B cell (primary cell): ENCODE measurements at regions of chr14 and their contacts with region 1.

Region 1: GRCh38 chr14:23320774-23321571 is at the start of gene PABPN1:
- DNase-seq: peak; percentile 100
- ATAC-seq: peak; percentile 84
- H3K4me3 ChIP-seq: peak within 1 kb of the TSS; percentile 61 to 89 (median 79)
- H3K4me3 Mint-ChIP-seq: peak within 1 kb of the TSS; percentile 93
- H3K27ac ChIP-seq: peak within 1 kb of the TSS; percentile 91 to 99
- H3K27ac Mint-ChIP-seq: peak within 1 kb of the TSS; percentile 99
- H3K4me1 ChIP-seq: peaks cover 21 to 24% of the 10 kb centered on the region in 2 donors
- H3K4me1 Mint-ChIP-seq: peaks cover 33% of the 10 kb centered on the region
- H3K27me3 ChIP-seq: no peaks in the 10 kb centered on the region
- H3K27me3 Mint-ChIP-seq: no peaks in the 10 kb centered on the region
- CTCF ChIP-seq: no peak
- total RNA-seq, gene PABPN1: 280 and 293 TPM in 2 replicates

Region 2: DNA sequence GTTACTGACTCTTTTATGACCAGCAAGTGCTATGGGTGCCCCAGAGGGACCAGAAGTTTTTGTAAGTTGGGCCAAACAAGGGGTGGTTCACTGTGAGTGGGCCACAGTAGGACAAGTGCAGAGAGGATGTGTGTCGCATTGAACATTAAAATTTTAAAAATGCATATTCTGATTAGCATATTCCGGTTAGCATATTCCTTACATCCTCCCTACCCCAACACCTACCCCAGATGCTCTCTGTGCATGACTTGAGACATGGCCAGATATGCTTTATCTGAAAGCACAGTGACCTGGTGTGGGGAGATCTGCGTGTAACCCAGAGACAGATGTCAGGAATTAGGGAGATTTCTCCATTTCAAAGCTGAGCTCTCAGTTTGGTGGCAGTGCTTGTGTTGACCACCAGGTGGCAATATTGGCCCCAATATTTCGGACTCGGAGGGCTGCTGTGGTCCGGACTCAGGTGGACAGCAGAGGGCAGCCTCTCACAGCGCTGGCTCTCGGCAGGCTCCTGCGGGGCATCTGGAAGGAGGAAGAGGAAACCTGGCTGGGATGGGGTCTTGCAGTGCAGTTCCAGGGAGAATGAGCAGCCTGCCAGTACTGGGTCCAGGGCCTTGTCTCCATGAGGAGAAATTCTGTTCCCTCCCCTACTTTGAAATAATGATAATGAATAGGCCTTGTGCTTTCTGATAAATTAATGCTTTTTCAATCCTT is 200.3 kb before region 1 on chr14:
- CTCF ChIA-PET with region 1: interaction called, 32 read pairs
- POLR2A ChIA-PET with region 1: interaction called, 4 read pairs
- intact Hi-C with region 1: no loop called
- DNase-seq: peak; percentile 89
- ATAC-seq: peak; percentile 95
- H3K4me3 ChIP-seq: peak overlapping the region in 4 of 5 experiments; percentile 27 to 36 (median 30)
- H3K4me3 Mint-ChIP-seq: peak overlapping the region; percentile 79
- H3K27ac ChIP-seq: peak overlapping the region; percentile 72 to 88
- H3K27ac Mint-ChIP-seq: peak overlapping the region; percentile 89
- H3K4me1 ChIP-seq: peaks cover 32 to 35% of the 10 kb centered on the region in 2 donors
- H3K4me1 Mint-ChIP-seq: peaks cover 34% of the 10 kb centered on the region
- H3K27me3 ChIP-seq: no peaks in the 10 kb centered on the region
- H3K27me3 Mint-ChIP-seq: peaks cover 7% of the 10 kb centered on the region
- CTCF ChIP-seq: peak; percentile 99

Region 3: GRCh38 chr14:23294734-23295561 is 26.0 kb before region 1 on chr14:
- CTCF ChIA-PET with region 1: interaction called, 56 read pairs
- POLR2A ChIA-PET with region 1: interaction called, 84 read pairs
- intact Hi-C with region 1: no loop called
- DNase-seq: peak; percentile 83
- ATAC-seq: peak; percentile 86
- H3K4me3 ChIP-seq: no peak overlapping the region
- H3K4me3 Mint-ChIP-seq: peak overlapping the region; percentile 27
- H3K27ac ChIP-seq: no peak overlapping the region
- H3K27ac Mint-ChIP-seq: peak overlapping the region; percentile 47
- H3K4me1 ChIP-seq: peaks cover 5 to 12% of the 10 kb centered on the region in 2 donors
- H3K4me1 Mint-ChIP-seq: peaks cover 25% of the 10 kb centered on the region
- H3K27me3 ChIP-seq: no peaks in the 10 kb centered on the region
- H3K27me3 Mint-ChIP-seq: no peaks in the 10 kb centered on the region
- CTCF ChIP-seq: peak; percentile 85

Region 4: DNA sequence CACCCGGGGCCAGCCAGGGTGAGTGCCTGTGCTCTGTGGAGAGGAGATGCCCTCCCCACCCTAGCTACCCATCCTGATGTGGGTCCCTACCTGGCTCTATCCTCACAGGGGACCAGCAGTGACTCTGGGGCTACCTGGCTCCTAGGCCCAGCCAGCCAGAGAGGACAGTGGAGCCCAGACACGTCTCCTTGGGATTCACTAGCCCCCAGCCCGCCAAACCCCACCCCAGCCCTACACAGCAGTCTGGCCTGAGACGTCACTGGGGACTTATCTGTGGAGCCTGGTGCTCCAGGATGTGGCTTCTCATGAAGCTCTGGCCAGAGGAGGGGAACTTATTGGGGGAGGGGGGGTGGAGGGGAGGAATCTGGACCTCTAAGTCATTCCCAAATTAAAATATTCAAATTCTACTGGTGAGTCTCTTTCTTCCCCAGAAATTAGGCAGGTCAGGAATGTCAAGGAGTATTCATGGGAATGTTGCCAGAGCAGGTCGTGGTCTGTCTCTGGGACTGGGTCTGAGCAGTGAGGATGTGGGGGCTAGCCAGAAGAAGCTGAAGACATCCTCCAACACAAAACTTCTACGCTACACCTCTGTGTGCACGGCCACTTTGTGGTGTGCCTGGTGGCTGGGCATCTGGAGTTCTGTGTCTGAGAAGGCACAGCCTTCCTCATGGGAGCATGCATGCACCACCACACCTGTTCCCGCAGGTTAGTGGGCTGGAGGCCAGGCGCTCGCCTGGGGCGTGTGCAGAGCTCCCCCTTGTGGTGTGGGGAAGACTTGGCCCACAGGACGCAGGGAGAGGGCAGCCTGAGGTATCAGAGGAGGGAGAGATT is 58.6 kb after region 1 on chr14:
- CTCF ChIA-PET with region 1: interaction called, 24 read pairs
- POLR2A ChIA-PET with region 1: no interaction called
- intact Hi-C with region 1: no loop called
- DNase-seq: peak; percentile 74
- ATAC-seq: peak; percentile 87
- H3K4me3 ChIP-seq: no peak overlapping the region
- H3K4me3 Mint-ChIP-seq: no peak overlapping the region
- H3K27ac ChIP-seq: no peak overlapping the region
- H3K27ac Mint-ChIP-seq: no peak overlapping the region
- H3K4me1 ChIP-seq: no peaks in the 10 kb centered on the region
- H3K4me1 Mint-ChIP-seq: no peaks in the 10 kb centered on the region
- H3K27me3 ChIP-seq: peaks cover 0 to 16% (median 0%) of the 10 kb centered on the region in 4 experiments
- H3K27me3 Mint-ChIP-seq: peaks cover 25% of the 10 kb centered on the region
- CTCF ChIP-seq: peak; percentile 91

Region 5: GRCh38 chr14:23478111-23478759 is 157.3 kb after region 1 on chr14:
- CTCF ChIA-PET with region 1: no interaction called
- POLR2A ChIA-PET with region 1: no interaction called
- intact Hi-C with region 1: no loop called
- DNase-seq: peak; percentile 79
- ATAC-seq: peak; percentile 73
- H3K4me3 ChIP-seq: no peak overlapping the region
- H3K4me3 Mint-ChIP-seq: no peak overlapping the region
- H3K27ac ChIP-seq: peak overlapping the region in 1 of 2 donors; percentile 4
- H3K27ac Mint-ChIP-seq: no peak overlapping the region
- H3K4me1 ChIP-seq: no peaks in the 10 kb centered on the region
- H3K4me1 Mint-ChIP-seq: no peaks in the 10 kb centered on the region
- H3K27me3 ChIP-seq: no peaks in the 10 kb centered on the region
- H3K27me3 Mint-ChIP-seq: no peaks in the 10 kb centered on the region
- CTCF ChIP-seq: peak; percentile 81

Region 6: DNA sequence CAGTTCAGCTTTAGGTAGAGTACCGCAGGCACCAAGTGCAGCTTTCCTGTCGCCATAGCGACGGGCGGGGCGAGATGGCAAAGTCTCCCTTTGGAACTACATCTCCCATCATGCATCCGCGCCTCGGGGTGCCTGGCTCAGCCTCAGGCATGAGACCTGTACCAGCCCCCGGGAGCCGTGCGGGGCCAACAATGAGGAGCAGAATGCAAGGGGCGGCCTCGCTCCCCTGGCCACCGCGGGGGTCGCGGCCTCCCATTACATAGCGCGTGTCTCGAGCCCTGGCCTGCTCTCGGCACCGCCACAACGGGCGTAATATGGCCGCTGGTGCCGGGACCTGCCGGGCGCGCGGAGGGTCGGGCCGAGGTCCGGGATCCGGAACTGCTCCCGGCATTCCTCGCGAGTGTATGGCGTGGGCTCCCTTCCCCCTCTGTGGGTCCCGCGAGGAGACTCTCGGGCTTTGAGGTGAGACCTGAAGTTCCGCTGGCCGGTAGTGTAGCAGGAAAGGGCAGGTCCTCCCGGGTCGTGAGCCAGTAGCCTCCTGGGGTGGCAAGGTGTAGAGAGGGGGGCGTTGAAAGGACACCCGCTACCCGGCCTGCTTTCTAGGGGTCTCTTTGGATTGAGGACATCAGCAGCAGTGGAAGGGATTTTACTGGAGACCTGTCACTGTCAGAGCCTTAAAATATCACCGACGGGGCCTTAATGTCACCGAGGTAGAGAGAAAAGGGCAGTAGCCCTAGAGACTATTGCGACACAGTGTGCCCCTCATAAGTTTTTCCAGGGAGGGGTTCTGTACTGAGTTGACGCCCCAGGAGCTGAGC is 235.1 kb after region 1 on chr14 and contains the start of gene THTPA:
- CTCF ChIA-PET with region 1: interaction called, 6 read pairs
- POLR2A ChIA-PET with region 1: interaction called, 5 read pairs
- intact Hi-C with region 1: loop called (anchors 2 kb)
- DNase-seq: peak; percentile 96
- ATAC-seq: peak; percentile 78
- H3K4me3 ChIP-seq: peak within 1 kb of the TSS; percentile 17 to 97 (median 81)
- H3K4me3 Mint-ChIP-seq: peak within 1 kb of the TSS; percentile 98
- H3K27ac ChIP-seq: peak within 1 kb of the TSS; percentile 69 to 84
- H3K27ac Mint-ChIP-seq: peak within 1 kb of the TSS; percentile 99
- H3K4me1 ChIP-seq: peaks cover 19 to 36% of the 10 kb centered on the region in 2 donors
- H3K4me1 Mint-ChIP-seq: peaks cover 45% of the 10 kb centered on the region
- H3K27me3 ChIP-seq: no peaks in the 10 kb centered on the region
- H3K27me3 Mint-ChIP-seq: no peaks in the 10 kb centered on the region
- CTCF ChIP-seq: no peak
- total RNA-seq, gene THTPA: 21.4 and 21.5 TPM in 2 replicates

Region 7: DNA sequence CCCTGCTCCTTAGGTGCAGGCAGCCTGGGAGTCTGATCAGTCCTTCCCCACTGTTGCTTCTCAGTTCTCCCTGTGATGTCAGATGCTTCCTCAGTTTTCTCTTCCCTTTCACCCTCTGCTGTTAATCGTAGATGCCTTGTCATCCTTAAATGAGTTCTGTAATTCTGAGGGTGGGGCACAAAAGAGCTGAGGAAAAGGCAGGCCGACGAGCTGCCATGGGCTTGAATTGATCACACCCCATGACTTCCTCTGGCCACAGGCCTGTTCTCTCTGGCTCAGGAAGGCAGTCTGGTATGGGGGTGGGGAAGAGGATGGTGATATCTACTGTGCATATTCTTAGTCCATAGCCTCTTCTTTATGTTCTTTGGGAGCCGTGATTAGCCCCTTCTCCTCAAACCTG is 251.9 kb after region 1 on chr14:
- CTCF ChIA-PET with region 1: no interaction called
- POLR2A ChIA-PET with region 1: no interaction called
- intact Hi-C with region 1: no loop called
- DNase-seq: no peak
- ATAC-seq: no peak
- H3K4me3 ChIP-seq: no peak overlapping the region
- H3K4me3 Mint-ChIP-seq: no peak overlapping the region
- H3K27ac ChIP-seq: no peak overlapping the region
- H3K27ac Mint-ChIP-seq: no peak overlapping the region
- H3K4me1 ChIP-seq: peaks cover 25 to 26% of the 10 kb centered on the region in 2 donors
- H3K4me1 Mint-ChIP-seq: peaks cover 23% of the 10 kb centered on the region
- H3K27me3 ChIP-seq: peaks cover 0 to 44% (median 20%) of the 10 kb centered on the region in 4 experiments
- H3K27me3 Mint-ChIP-seq: peaks cover 48% of the 10 kb centered on the region
- CTCF ChIP-seq: no peak

Region 8: DNA sequence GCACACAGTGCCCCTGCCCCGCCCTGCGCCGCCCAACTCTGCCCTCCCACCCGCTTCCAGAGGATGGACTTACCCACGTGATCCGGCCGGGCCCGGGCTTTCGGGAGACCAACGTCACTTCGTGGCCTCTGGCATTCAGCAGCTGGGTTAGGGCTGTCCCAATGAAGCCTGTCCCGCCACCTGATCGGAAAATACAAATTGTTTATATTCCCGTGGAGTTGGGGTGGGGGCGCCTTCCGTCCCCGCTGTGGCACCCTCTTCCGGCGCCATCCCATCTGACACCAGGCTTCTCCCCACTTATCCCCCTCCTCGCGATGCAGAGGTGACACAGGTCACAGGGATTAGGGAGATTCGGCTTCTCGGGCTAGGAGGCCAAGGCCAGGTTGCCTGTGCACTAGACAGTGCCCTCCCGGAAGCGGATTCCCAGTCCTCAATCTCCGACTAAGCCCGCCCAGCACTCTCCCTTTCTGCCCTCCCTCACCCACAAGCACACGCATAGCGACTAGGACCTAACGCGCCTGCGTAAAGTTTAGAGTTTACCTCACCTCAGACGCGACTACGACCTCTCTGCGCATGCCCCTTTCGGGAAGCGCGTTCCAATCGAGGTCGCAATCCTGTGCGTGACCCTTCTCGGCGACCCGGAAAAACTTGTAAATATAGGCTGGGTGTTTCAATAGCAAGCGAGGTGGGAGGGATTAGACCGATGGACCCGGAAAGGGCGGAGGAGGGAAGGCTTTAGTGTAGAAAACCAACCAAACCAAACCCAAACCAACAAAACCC is 1121.5 kb after region 1 on chr14 and contains the start of gene SDR39U1:
- CTCF ChIA-PET with region 1: no interaction called
- POLR2A ChIA-PET with region 1: no interaction called
- intact Hi-C with region 1: loop called (anchors 2 kb)
- DNase-seq: peak; percentile 99
- ATAC-seq: peak; percentile 89
- H3K4me3 ChIP-seq: peak within 1 kb of the TSS; percentile 86 to 98 (median 94)
- H3K4me3 Mint-ChIP-seq: peak within 1 kb of the TSS; percentile 97
- H3K27ac ChIP-seq: peak within 1 kb of the TSS; percentile 96
- H3K27ac Mint-ChIP-seq: peak within 1 kb of the TSS; percentile 98
- H3K4me1 ChIP-seq: peaks cover 20 to 29% of the 10 kb centered on the region in 2 donors
- H3K4me1 Mint-ChIP-seq: peaks cover 48% of the 10 kb centered on the region
- H3K27me3 ChIP-seq: no peaks in the 10 kb centered on the region
- H3K27me3 Mint-ChIP-seq: no peaks in the 10 kb centered on the region
- CTCF ChIP-seq: no peak
- total RNA-seq, gene SDR39U1: 107 and 126 TPM in 2 replicates